PC-9 (cell line): ENCODE measurements at regions of chr1 and their contacts with region 1.

Region 1: DNA sequence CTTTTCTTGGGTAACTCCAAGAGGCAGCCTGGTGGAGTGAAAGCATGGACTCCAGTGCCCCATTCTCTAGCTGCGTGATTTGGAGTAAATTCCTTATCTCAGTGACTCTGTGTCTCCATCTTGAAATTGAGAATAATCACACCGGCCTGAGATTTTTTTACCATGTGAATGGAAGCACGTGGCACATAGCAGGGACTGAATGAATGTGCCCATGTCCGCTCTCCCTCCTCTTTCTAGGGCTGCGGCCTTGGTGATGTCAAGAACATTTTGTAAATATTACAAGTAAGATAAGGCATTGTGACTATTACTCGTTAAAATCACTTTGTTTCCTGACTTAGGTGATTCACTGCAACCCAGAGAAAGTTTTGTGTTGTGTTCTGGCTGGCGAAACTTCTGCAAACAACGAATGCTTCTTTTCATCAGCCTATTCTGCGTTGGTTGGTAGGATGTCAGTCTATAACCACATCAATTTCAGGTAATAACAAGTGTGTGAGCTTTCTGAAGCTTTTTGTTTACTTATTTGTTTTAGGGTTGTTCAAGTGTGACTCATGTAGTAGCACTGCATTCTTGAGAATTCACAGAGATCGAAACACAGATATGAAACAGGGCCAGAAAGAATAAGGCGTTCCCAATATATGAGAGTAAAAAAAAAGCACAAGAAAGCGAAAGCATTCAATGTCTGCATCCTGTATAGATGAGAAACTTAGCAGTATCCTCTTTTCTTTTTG is 135.7 kb upstream of the SLC45A1 start:
- DNase-seq: peak; percentile 64 to 98
- H3K4me3 ChIP-seq: peak overlapping the region; percentile 28; the same call in 1 of the 2 replicates
- H3K27ac ChIP-seq: peak overlapping the region; percentile 100
- H3K4me1 ChIP-seq: peaks cover 40% of the 10 kb centered on the region
- H3K27me3 ChIP-seq: no peaks in the 10 kb centered on the region
- CTCF ChIP-seq: no peak

Region 2: DNA sequence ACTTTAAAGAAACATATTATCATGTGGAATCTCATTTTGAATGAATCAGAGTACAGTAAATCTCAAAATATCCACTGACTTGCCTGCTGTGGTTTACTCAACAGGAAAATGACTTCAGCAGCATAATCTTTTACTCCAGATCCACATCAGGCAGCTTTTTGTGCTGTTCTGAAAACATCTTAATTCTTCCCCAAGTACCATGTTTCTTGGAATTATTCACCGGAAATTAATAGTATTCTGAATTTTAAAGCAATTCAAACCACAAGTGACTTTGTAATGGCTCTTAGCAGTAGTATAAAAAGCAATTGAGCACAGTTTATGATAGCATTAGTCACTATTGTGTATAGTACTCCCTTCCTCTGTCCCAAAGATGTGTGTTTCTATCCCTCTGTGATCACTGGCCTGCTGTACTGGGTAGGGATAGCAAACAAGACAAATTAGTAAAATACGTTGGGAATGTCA is 91.9 kb before region 1 on chr1:
- CTCF ChIA-PET with region 1: interaction called, 13 read pairs
- POLR2A ChIA-PET with region 1: no interaction called
- intact Hi-C with region 1: no loop called
- DNase-seq: peak in 1 of 2 experiments; percentile 67
- H3K4me3 ChIP-seq: no peak overlapping the region
- H3K27ac ChIP-seq: peak overlapping the region; percentile 96
- H3K4me1 ChIP-seq: peaks cover 53% of the 10 kb centered on the region
- H3K27me3 ChIP-seq: no peaks in the 10 kb centered on the region
- CTCF ChIP-seq: no peak

Region 3: DNA sequence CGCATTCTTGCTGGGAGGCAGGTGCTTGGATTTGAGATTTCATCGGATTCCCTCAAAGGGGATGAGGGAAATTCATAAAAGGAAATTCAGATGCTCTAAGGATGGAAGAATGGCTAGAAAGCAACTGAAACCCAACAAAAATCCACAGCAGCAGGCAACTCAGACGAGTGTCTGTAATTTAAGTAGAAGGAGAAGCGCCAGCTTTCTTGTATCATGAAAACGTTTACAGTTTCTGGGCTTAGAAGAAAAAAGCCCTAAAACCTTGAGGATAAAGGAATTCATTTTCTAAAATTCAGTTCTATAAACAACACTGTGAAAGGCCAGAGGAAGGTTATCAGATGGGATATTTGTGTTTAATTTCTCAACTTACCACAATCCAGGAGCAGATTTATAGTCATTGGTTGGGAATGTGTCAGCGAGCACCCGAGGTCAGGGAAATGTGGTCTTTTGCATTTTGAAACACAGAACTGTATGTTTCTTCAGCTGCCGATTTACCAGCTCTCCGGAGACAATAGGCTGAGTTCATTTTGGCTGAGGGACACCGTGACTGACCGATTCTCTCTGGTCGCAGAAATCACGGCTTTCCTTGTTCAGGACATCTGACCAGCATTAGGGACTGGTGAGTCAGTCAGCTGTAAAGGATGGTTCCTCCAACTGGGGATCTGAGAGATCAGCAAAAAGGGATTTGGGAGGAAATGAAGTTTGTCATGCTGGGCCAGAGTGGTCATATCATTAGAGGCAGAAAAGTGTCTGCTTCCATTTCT is 44.5 kb before region 1 on chr1:
- CTCF ChIA-PET with region 1: no interaction called
- POLR2A ChIA-PET with region 1: no interaction called
- intact Hi-C with region 1: loop called (anchors 1 kb)
- DNase-seq: peak; percentile 55 to 94
- H3K4me3 ChIP-seq: peak overlapping the region; percentile 54; the same call in 1 of the 2 replicates
- H3K27ac ChIP-seq: peak overlapping the region; percentile 100
- H3K4me1 ChIP-seq: peaks cover 85% of the 10 kb centered on the region
- H3K27me3 ChIP-seq: no peaks in the 10 kb centered on the region
- CTCF ChIP-seq: no peak

Region 4: GRCh38 chr1:8283058-8283884 is 101.1 kb after region 1 on chr1:
- CTCF ChIA-PET with region 1: no interaction called
- POLR2A ChIA-PET with region 1: no interaction called
- intact Hi-C with region 1: no loop called
- DNase-seq: no peak
- H3K4me3 ChIP-seq: no peak overlapping the region
- H3K27ac ChIP-seq: no peak overlapping the region
- H3K4me1 ChIP-seq: no peaks in the 10 kb centered on the region
- H3K27me3 ChIP-seq: no peaks in the 10 kb centered on the region
- CTCF ChIP-seq: no peak

Region 5: DNA sequence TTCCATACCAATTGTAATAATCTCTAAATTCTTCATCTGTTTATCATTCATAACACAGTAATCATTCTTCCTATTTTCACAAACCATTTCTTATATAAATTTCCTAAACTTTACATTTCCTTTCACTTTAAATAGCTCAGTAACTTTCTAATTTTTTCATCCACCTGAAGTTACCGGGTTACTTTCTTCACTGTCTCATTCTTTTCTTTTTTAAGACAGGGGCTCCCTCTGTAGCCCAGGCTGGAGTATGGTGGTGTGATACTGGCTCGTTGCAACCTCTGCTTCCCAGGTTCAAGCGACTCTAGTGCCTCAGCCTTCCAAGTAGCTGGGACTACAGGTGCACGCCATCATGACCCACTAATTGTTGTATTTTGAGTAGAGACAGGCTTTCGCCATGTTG is 593.9 kb after region 1 on chr1:
- CTCF ChIA-PET with region 1: no interaction called
- POLR2A ChIA-PET with region 1: no interaction called
- intact Hi-C with region 1: no loop called
- DNase-seq: no peak
- H3K4me3 ChIP-seq: no peak overlapping the region
- H3K27ac ChIP-seq: no peak overlapping the region
- H3K4me1 ChIP-seq: no peaks in the 10 kb centered on the region
- H3K27me3 ChIP-seq: no peaks in the 10 kb centered on the region
- CTCF ChIP-seq: no peak